Pancreas (tissue), 10 donors: ENCODE measurements at regions of chr3 and their contacts with region 1.

Region 1: DNA sequence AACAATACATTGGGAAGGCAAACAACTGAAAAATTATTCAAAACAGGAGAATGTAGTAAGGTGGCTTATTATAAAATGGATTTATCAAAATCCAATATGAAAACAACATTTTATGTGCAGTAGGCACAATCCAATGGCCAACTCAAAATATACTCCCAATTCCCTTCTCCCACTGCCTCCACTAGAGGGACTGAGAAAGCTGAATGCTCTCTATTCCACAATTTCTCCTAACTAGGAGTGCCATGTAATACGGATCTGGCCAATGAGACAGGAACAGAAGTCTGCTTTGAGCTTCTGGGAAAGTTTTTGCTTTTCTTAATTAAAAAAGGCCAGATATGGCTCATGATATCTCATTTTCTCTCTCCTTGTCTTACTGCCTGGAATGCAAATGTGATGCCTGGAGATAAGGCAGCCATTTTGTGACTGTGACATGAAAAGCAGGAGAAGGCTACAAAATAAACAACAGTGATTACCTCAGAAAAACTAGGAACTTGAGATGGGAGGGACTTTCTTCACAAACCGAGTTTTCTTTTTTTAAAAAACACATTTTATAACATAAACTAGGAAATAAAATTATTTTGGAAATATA is 18.8 kb upstream of the VGLL4 start:
- DNase-seq: no peak
- ATAC-seq: peak in 1 of 4 donors; percentile 21
- H3K4me3 ChIP-seq: no peak overlapping the region
- H3K27ac ChIP-seq: peak overlapping the region in 2 of 4 donors; percentile 53 to 66
- H3K4me1 ChIP-seq: peaks cover 13 to 30% (median 18%) of the 10 kb centered on the region in 3 donors
- H3K27me3 ChIP-seq: no peaks in the 10 kb centered on the region
- CTCF ChIP-seq: peak in 2 of 4 donors; percentile 9 to 18

Region 2: GRCh38 chr3:11410564-11410963 is 251.9 kb before region 1 on chr3:
- intact Hi-C with region 1: no loop called
- DNase-seq: no peak
- ATAC-seq: no peak
- H3K4me3 ChIP-seq: no peak overlapping the region
- H3K27ac ChIP-seq: no peak overlapping the region
- H3K4me1 ChIP-seq: no peaks in the 10 kb centered on the region
- H3K27me3 ChIP-seq: no peaks in the 10 kb centered on the region
- CTCF ChIP-seq: no peak

Region 3: DNA sequence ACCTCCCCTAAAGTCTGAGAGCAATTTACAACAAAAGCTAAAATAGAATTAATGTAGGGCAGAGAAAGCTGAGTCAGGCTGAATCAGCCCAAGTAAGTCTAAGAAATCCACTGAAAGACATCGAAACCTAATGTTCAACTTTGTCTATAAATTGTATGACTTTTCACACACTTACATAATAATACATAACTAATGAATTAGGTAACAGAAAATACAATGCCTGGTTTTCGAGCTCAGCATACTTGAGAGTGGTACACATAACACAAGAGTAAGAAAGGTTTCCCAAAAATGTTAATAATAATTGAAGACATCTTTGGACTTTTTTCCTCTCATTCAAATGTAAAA is 36.6 kb after region 1 on chr3:
- intact Hi-C with region 1: no loop called
- DNase-seq: no peak
- ATAC-seq: no peak
- H3K4me3 ChIP-seq: no peak overlapping the region
- H3K27ac ChIP-seq: no peak overlapping the region
- H3K4me1 ChIP-seq: peaks cover 0 to 7% (median 0%) of the 10 kb centered on the region in 3 donors
- H3K27me3 ChIP-seq: no peaks in the 10 kb centered on the region
- CTCF ChIP-seq: no peak

Region 4: GRCh38 chr3:11719406-11720230 is 57.1 kb after region 1 on chr3:
- intact Hi-C with region 1: loop called in 1 of 3 experiments (anchors 10 kb)
- DNase-seq: peak; percentile 95 to 99 (median 98)
- ATAC-seq: peak; percentile 85 to 90 (median 87)
- H3K4me3 ChIP-seq: peak overlapping the region; percentile 58 to 94 (median 90)
- H3K27ac ChIP-seq: peak overlapping the region; percentile 89 to 95 (median 92)
- H3K4me1 ChIP-seq: peaks cover 9 to 14% (median 13%) of the 10 kb centered on the region in 3 donors
- H3K27me3 ChIP-seq: no peaks in the 10 kb centered on the region
- CTCF ChIP-seq: no peak

Region 5: GRCh38 chr3:12132881-12133280 is 470.4 kb after region 1 on chr3:
- intact Hi-C with region 1: no loop called
- DNase-seq: no peak
- ATAC-seq: no peak
- H3K4me3 ChIP-seq: no peak overlapping the region
- H3K27ac ChIP-seq: no peak overlapping the region
- H3K4me1 ChIP-seq: no peaks in the 10 kb centered on the region
- H3K27me3 ChIP-seq: no peaks in the 10 kb centered on the region
- CTCF ChIP-seq: no peak